GM10248 (cell line): ENCODE measurements at regions of chr5 and their contacts with region 1.

Region 1: DNA sequence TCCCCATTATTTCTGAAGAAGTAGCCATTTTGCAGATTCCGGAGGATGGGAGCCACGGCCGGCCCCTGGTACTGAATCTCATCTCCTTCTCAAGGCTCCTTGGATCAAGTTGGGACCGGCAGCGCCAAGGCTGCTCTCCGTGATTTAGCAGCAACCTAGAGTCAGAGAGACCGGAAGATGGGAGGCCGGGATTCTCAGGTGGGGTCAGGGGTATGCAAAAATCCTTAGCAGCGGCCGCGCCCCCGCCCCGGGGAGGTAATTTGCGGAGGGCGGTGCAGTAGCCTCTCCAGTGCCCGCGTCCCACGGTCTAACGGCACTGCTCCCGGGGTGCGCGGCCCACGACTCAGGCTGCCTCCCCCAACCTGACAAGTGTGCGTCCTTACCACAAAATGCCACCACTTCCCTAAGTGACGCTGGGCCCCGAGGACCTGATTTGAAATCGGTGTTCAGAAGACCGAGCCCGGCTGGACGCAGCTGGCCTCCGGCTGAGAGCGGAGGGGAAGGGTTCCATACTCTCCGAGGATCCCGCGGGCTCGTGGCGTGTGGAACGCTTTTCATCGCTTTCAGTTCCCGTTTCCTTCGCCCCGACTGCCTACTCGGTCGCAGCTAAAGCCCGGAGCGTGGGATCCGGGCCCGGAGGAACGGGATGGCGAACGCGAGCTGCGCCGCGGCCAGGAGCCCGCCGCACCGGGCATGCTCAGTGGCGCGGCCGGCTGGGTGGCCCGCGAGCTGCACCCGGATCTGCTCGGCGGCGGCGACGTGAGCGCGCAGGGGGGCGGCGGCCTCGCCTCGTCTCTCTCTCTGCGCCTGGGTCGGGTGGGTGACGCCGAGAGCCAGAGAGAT is at the start of gene SCAMP1:
- DNase-seq: peak; percentile 95
- CTCF ChIP-seq: peak; percentile 22

Region 2: DNA sequence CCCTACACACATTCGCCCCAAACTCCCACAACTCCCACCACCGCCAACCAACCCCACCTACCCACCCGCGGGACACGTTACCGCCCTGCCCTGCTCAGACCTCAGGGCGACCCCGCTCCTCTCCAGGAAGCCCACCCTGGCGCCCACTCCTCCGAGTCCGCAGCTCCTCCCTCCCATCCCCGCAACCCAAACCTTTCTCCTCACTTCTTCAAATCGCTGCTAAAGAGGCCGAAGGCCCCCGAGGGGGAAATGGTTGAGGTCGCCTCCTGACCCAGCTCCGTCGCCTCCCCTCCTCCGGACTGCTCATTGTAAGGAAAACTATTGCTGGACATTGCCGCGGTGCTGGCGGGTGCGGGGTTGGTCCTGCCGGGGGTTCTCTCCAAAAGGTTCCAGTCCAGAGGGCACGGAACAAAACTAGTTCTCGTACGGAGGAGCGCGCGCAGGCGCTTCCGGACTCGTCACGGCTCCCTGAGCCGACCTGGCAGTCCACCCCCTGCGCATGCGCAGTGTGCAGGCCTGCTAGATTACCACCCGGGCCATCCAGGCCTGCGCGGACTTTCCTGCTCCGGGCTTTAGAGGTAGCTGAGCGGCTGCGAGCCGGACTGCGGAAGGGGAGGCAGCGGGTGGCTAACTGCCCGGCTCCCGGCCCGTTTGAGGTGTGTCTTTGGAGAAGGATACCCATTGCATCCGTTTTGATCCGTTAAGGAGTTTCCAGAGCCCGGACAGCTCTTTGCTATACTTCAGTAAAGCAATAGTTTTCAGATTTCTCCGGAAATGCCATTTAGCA is 65.6 kb before region 1 on chr5 and contains the start of gene AP3B1:
- CTCF ChIA-PET with region 1: interaction called, 14 read pairs
- POLR2A ChIA-PET with region 1: interaction called, 15 read pairs
- DNase-seq: peak; percentile 98
- CTCF ChIP-seq: no peak

Region 3: GRCh38 chr5:79636981-79637733 is 1277.1 kb after region 1 on chr5:
- CTCF ChIA-PET with region 1: no interaction called
- POLR2A ChIA-PET with region 1: interaction called, 11 read pairs
- DNase-seq: no peak
- CTCF ChIP-seq: no peak